Ascending aorta (tissue), 2 donors: ENCODE measurements at regions of chr6 and their contacts with region 1.

Region 1: DNA sequence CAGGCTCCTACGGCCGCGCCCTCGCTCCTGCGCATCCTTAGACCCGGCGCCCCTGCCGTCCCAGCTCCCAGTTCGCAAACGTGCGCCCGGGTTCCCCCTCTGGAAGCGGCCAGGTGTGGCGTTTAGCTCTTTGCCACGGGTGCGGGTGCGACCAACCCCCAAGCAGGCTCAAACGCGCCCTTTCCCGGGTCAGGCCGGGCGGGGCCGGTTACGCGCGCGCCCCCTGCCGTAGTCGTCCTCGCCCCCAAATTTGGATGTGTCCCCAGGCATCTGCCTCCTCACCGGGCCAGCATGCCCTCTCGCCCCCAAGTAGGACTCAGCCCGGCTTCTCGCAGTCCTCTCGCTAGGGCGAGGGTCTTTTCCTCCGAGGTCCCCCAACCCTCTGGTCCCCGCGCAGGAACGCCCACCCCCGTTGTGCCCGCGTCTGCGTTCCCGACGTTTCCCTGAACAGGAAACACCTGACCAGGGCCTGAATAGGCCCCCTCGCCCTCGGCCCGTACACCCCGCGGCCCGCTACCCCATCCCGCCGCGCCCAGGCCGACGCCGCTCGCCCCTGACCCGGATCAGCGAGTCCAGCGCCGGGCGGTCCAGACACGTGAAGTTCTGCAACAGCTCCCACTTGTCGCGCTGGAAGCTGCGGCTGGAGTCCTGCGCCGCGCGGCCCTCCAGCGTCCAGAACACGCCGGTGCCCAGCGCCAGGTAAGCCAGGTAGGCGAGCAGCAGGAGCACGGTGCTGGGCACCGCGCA is 520 bp downstream of the KCNK17 start:
- DNase-seq: no peak
- H3K4me3 ChIP-seq: peak overlapping the region; percentile 46 to 71
- H3K27ac ChIP-seq: peak overlapping the region; percentile 67 to 75
- H3K4me1 ChIP-seq: peaks cover 0 to 6% of the 10 kb centered on the region in 2 donors
- H3K27me3 ChIP-seq: no peaks in the 10 kb centered on the region
- CTCF ChIP-seq: peak in 1 of 3 experiments; percentile 24

Region 2: DNA sequence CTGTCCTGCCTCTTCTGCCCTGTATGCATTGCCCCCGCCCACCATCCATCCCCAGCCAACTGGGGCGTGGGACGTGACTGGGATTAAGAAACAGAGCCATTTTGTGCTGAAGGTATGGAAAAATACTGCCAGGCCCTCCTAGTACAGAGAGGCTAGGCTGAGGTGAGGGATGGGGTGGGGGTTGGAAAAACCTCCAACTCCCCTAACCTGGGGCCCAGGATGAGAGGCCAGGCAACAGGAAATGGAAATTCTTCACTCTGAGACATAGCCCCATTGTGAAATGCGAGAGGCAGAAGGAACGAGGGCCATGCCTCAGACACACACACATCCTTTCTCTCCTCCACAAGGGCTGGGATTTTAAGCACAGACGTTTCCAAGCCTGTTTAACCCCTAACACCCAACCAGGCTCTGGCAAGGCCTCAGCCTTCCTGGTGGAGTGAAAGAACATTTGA is 104.3 kb before region 1 on chr6:
- intact Hi-C with region 1: no loop called
- DNase-seq: no peak
- H3K4me3 ChIP-seq: no peak overlapping the region
- H3K27ac ChIP-seq: no peak overlapping the region
- H3K4me1 ChIP-seq: no peaks in the 10 kb centered on the region
- H3K27me3 ChIP-seq: no peaks in the 10 kb centered on the region
- CTCF ChIP-seq: no peak

Region 3: GRCh38 chr6:39263303-39264037 is 50.2 kb before region 1 on chr6:
- intact Hi-C with region 1: no loop called
- DNase-seq: no peak
- H3K4me3 ChIP-seq: no peak overlapping the region
- H3K27ac ChIP-seq: no peak overlapping the region
- H3K4me1 ChIP-seq: no peaks in the 10 kb centered on the region
- H3K27me3 ChIP-seq: no peaks in the 10 kb centered on the region
- CTCF ChIP-seq: no peak

Region 4: DNA sequence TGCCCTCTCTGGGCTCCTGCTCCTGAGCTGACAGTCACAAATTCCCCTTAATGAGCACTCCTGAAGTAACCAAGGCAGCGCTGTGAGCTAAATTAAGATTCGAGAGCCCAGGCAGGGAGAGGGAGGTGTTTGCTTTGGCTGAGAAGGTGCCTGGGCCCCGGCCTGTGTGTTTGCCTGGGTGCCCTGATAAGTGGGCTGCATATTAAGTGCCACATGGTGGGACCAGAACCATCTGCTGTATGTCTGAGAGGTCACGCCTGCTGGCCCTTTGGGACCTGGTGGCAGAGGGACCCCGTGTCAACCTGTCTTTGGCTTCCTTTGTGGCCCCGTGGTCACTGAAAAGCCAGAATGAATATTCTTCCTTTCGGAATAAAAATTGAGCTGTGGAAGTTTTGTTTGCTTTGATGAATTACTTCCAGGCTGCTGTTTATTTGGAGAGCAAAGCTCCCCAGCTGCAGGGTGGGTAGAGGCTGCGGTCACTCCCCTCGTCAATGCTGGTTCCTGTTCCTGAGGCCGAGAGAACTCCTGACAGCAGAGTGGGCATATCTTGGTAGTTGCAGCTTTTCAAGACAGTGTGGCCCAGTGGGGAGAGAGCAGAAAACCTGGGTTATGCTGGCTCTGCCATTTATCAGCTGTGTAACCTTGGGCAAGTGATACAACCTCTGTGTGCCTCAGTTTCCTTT is 26.3 kb after region 1 on chr6:
- intact Hi-C with region 1: loop called (anchors 2 kb)
- DNase-seq: no peak
- H3K4me3 ChIP-seq: peak overlapping the region in 1 of 2 donors; percentile 5
- H3K27ac ChIP-seq: peak overlapping the region; percentile 61 to 75
- H3K4me1 ChIP-seq: peaks cover 14 to 39% of the 10 kb centered on the region in 2 donors
- H3K27me3 ChIP-seq: no peaks in the 10 kb centered on the region
- CTCF ChIP-seq: no peak